CD4-positive, alpha-beta memory T cell (primary cell): ENCODE measurements at regions of chr10 and their contacts with region 1.

Region 1: DNA sequence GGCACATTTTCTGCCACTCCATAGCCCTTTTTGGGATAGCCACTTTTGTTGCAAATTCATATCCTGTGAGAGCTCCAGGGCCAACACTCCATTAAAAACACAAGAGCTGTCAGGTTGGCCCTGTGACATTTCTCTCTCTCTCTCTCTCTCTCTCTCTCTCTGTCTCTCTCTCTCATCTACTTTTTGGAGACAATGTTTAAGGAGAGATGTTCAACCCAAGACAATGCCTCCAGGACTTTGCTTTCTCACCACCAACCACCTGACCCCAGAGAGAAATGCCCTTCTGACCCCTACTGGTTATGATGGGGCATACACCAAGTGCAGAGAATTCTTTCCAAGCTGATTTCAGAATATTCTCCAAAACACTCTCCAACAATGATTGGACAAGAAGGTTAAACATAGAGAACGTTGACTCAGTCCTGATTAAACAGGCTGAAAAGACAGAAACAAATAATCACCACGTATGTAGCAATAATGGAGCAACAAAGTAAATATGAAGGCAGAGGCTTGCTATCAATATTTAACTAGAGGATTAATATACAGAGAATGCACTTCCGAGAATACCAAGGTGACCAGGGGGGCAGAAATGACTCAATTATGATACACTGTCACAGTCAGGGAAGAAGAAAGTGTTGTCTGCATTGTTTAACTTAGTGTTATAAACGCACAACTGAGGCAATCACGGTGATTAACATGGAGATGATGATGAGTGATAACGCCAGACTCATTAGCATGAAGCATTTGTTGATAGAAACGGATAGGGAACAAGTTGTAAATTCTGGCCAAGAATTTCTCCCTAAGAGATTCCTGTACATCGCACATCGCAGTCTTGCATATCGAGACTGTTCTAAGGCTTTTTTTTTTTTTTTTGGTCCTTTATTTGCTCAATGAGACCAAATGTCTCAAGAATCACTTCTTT is 178.5 kb downstream of the NRP1 start:
- DNase-seq: peak; percentile 59 to 71 (median 67)
- H3K4me3 ChIP-seq: no peak overlapping the region
- H3K4me3 Mint-ChIP-seq: peak overlapping the region in 6 of 8 donors; percentile 3 to 79 (median 50)
- H3K27ac ChIP-seq: no peak overlapping the region
- H3K27ac Mint-ChIP-seq: peak overlapping the region; percentile 21 to 98 (median 84)
- H3K4me1 ChIP-seq: peaks cover 53% of the 10 kb centered on the region
- H3K4me1 Mint-ChIP-seq: peaks cover 35 to 54% (median 48%) of the 10 kb centered on the region in 4 donors
- H3K27me3 ChIP-seq: no peaks in the 10 kb centered on the region
- H3K27me3 Mint-ChIP-seq: no peaks in the 10 kb centered on the region

Region 2: DNA sequence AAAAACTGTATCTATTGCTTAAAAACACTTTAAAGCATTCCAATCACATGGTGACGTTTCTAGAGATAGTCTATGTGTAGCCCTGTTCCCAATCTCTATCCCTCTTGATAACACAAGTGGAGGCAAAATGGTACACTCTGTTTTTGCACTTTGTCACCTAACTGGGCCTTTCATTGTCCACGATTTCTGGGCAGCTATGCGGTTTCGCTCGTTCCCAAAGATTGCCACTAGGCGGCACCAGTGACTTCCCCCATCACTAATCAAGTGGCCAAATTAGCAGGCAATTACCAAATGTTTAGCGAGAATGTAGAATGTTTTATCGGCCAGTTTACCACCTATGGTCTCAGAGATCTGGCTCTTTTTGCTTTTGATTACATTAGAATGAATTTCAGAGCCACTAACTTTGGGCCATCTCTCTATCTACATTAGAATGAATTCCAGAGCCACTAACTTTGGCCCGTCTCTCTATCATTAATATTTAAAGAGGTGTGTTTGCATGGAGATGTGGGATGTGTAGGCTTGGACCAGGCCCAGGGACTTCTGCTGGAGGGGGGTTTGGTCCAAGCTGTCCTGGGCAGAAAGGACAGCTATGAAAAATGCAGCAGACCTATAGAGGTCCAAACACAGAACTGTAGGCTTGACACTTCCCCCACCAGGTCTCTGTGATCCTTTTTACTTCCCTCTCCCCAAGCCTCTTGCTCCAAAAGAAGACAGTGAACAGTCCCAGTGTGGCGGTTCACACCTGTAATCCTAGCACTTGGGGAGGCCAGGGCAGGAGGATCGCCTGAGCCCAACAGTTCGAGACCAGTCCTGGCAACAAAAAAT is 899.2 kb before region 1 on chr10:
- CTCF ChIA-PET with region 1: no interaction called
- POLR2A ChIA-PET with region 1: no interaction called
- intact Hi-C with region 1: loop called (anchors 10 kb)
- DNase-seq: peak; percentile 62 to 67 (median 66)
- H3K4me3 ChIP-seq: no peak overlapping the region
- H3K4me3 Mint-ChIP-seq: peak overlapping the region in 3 of 8 donors; percentile 5 to 44 (median 20)
- H3K27ac ChIP-seq: no peak overlapping the region
- H3K27ac Mint-ChIP-seq: peak overlapping the region in 1 of 7 donors; percentile 46
- H3K4me1 ChIP-seq: peaks cover 7% of the 10 kb centered on the region
- H3K4me1 Mint-ChIP-seq: peaks cover 5 to 10% (median 7%) of the 10 kb centered on the region in 4 donors
- H3K27me3 ChIP-seq: no peaks in the 10 kb centered on the region
- H3K27me3 Mint-ChIP-seq: no peaks in the 10 kb centered on the region

Region 3: DNA sequence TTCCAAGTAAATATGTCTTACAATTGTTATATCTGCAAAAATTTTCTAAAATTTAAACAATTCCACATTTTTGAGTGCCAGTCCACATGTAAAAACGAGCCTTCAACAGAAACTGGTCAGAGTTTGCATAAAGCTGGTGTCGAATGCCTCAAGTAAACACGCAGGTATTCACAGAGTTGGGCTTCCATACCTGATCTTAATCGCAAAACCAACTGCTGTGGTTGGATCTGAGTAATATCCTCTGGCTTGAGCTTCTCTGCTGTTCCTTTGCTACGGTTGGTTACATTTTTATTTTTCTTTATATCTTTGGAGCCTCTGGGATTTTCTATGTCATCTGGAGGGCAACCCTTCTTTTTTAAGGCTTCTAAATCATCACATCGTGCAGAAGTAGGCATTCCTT is 226.3 kb before region 1 on chr10:
- CTCF ChIA-PET with region 1: interaction called, 7 read pairs
- POLR2A ChIA-PET with region 1: no interaction called
- intact Hi-C with region 1: loop called (anchors 5 kb)
- DNase-seq: peak; percentile 18 to 80 (median 35)
- H3K4me3 ChIP-seq: no peak overlapping the region
- H3K4me3 Mint-ChIP-seq: peak overlapping the region in 7 of 8 donors; percentile 37 to 81 (median 59)
- H3K27ac ChIP-seq: no peak overlapping the region
- H3K27ac Mint-ChIP-seq: peak overlapping the region in 6 of 7 donors; percentile 1 to 90 (median 69)
- H3K4me1 ChIP-seq: peaks cover 72% of the 10 kb centered on the region
- H3K4me1 Mint-ChIP-seq: peaks cover 43 to 90% (median 61%) of the 10 kb centered on the region in 4 donors
- H3K27me3 ChIP-seq: no peaks in the 10 kb centered on the region
- H3K27me3 Mint-ChIP-seq: no peaks in the 10 kb centered on the region

Region 4: GRCh38 chr10:33025039-33025438 is 130.9 kb before region 1 on chr10:
- CTCF ChIA-PET with region 1: interaction called, 6 read pairs
- POLR2A ChIA-PET with region 1: interaction called, 31 read pairs
- intact Hi-C with region 1: loop called (anchors 1 kb)
- DNase-seq: no peak
- H3K4me3 ChIP-seq: no peak overlapping the region
- H3K4me3 Mint-ChIP-seq: peak overlapping the region in 4 of 8 donors; percentile 3 to 67 (median 10)
- H3K27ac ChIP-seq: no peak overlapping the region
- H3K27ac Mint-ChIP-seq: peak overlapping the region in 6 of 7 donors; percentile 13 to 85 (median 65)
- H3K4me1 ChIP-seq: peaks cover 63% of the 10 kb centered on the region
- H3K4me1 Mint-ChIP-seq: peaks cover 47 to 73% (median 55%) of the 10 kb centered on the region in 4 donors
- H3K27me3 ChIP-seq: no peaks in the 10 kb centered on the region
- H3K27me3 Mint-ChIP-seq: no peaks in the 10 kb centered on the region

Region 5: DNA sequence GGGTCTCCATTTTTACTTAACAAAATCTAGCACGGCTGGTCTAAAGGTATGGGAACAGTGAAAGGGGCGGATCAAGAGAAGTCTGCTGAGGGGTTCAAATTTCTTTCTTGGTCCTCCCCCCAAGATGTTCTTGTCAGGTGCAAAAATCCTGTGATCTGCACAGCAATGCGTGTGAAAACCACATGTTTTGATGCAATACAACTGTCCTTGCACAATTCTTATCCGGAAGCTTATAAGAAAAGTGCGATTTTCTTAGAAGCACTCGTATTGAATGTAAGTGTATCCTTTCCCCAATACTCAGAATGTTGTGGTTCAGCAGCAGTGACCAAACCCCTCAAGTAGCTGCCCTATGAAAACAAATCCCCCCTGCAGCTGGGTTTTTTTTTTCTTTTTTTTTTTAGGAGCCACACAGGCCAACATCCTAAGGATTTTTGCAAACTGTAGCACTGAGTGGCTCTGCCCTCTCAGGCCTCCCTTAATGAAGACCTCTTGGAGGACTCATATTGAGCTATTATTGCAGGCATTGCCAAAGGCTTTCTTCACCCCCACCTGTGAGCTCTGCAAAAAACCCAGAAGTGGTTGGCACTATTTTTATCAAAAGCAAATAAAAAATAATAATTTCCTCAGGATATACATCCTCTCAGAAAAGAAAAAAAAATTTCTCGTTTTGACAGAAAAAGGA is 46.0 kb before region 1 on chr10:
- CTCF ChIA-PET with region 1: interaction called, 89 read pairs
- POLR2A ChIA-PET with region 1: interaction called, 2,213 read pairs
- intact Hi-C with region 1: no loop called
- DNase-seq: peak; percentile 52 to 59 (median 53)
- H3K4me3 ChIP-seq: peak overlapping the region in 1 of 2 donors; percentile 25
- H3K4me3 Mint-ChIP-seq: peak overlapping the region; percentile 60 to 86 (median 77)
- H3K27ac ChIP-seq: peak overlapping the region; percentile 57
- H3K27ac Mint-ChIP-seq: peak overlapping the region; percentile 91 to 98 (median 98)
- H3K4me1 ChIP-seq: peaks cover 98% of the 10 kb centered on the region
- H3K4me1 Mint-ChIP-seq: peaks cover 67 to 99% (median 83%) of the 10 kb centered on the region in 4 donors
- H3K27me3 ChIP-seq: no peaks in the 10 kb centered on the region
- H3K27me3 Mint-ChIP-seq: no peaks in the 10 kb centered on the region

Region 6: DNA sequence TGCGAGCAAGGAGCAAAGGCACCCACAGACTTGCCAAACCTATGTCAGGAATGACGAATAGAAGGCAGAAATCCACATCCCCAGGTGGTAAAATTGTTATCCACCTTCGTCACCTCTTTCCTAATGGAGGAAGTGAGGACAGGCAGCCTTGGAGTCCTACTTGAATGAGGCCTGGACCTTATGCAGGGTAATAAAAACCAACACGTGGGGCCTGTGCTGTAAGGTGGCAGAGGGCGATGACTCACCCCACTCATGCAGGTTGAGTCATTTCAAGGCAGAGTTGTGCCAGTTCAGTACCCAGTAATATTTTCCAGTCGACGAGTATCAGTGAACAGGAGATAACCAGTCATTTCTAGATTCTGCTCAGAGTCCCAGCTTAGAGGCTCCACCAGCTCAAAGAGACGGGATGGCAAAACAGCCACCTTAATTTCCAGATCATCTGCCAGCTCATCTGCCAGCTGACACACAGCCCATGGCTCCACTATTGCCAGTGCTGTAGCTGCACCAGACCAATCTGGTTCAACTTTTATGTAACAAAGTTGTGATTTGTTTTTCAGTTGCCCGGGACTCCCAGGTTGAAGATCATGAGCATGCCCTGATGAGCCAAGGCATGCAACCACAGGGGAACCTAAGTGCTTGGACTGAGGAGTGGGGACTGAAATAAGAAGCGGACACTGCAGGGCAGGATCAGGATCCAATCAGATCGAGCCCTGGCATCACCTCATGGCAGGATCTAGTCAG is 21.8 kb before region 1 on chr10:
- CTCF ChIA-PET with region 1: interaction called, 102 read pairs
- POLR2A ChIA-PET with region 1: interaction called, 2,213 read pairs
- intact Hi-C with region 1: loop called (anchors 1 kb)
- DNase-seq: peak; percentile 59 to 96 (median 73)
- H3K4me3 ChIP-seq: no peak overlapping the region
- H3K4me3 Mint-ChIP-seq: peak overlapping the region; percentile 13 to 84 (median 62)
- H3K27ac ChIP-seq: peak overlapping the region; percentile 84
- H3K27ac Mint-ChIP-seq: peak overlapping the region; percentile 89 to 100 (median 100)
- H3K4me1 ChIP-seq: peaks cover 98% of the 10 kb centered on the region
- H3K4me1 Mint-ChIP-seq: peaks cover 71 to 97% (median 85%) of the 10 kb centered on the region in 4 donors
- H3K27me3 ChIP-seq: no peaks in the 10 kb centered on the region
- H3K27me3 Mint-ChIP-seq: no peaks in the 10 kb centered on the region